ENCODE measurements at regions of chr1 and their contacts with region 1.

Region 1: GRCh38 chr1:234533975-234534876 is 55.2 kb upstream of the TARBP1 start:
- DNase-seq: peak; percentile 89 to 95
- ATAC-seq: peak in 7 of 8 donors; percentile 6 to 60 (median 30)
- H3K4me3 ChIP-seq: peak overlapping the region in 1 of 10 donors; percentile 1
- H3K27ac ChIP-seq: peak overlapping the region; percentile 94 to 99 (median 98)
- H3K4me1 ChIP-seq: peaks cover 53 to 100% (median 97%) of the 10 kb centered on the region in 9 donors
- H3K27me3 ChIP-seq: no peaks in the 10 kb centered on the region
- CTCF ChIP-seq: no peak

Region 2: DNA sequence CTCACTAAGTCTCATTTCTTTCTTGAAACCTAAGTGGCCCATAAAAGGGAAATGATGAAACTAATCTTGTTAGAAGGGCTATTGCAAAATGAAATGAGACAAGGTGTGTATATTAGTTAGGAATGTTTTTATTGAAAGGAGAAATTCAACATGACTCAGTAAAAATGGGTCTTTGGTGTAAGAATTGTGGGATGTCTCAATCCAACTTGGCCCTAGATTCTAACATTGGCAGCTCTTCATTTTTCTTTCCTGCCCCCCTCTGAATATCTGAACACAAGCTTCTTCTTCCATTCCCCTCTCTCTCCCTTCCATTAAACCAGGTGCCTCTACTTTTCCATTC is 28.5 kb before region 1 on chr1:
- intact Hi-C with region 1: no loop called
- DNase-seq: no peak
- ATAC-seq: no peak
- H3K4me3 ChIP-seq: no peak overlapping the region
- H3K27ac ChIP-seq: no peak overlapping the region
- H3K4me1 ChIP-seq: peaks cover 0 to 14% (median 7%) of the 10 kb centered on the region in 9 donors
- H3K27me3 ChIP-seq: no peaks in the 10 kb centered on the region
- CTCF ChIP-seq: no peak

Region 3: GRCh38 chr1:234579967-234580366 is 45.7 kb after region 1 on chr1:
- intact Hi-C with region 1: loop called in 2 of 10 experiments (anchors 2 to 5 kb)
- DNase-seq: no peak
- ATAC-seq: no peak
- H3K4me3 ChIP-seq: no peak overlapping the region
- H3K27ac ChIP-seq: no peak overlapping the region
- H3K4me1 ChIP-seq: peaks cover 0 to 35% (median 27%) of the 10 kb centered on the region in 9 donors
- H3K27me3 ChIP-seq: no peaks in the 10 kb centered on the region
- CTCF ChIP-seq: peak in 2 of 9 donors; percentile 18 to 26

Region 4: GRCh38 chr1:234887016-234887900 is 353.0 kb after region 1 on chr1:
- intact Hi-C with region 1: loop called in 1 of 10 experiments (anchors 5 kb)
- DNase-seq: peak in 1 of 2 donors; percentile 70
- ATAC-seq: peak; percentile 60 to 86 (median 82)
- H3K4me3 ChIP-seq: peak overlapping the region in 1 of 10 donors; percentile 7
- H3K27ac ChIP-seq: peak overlapping the region; percentile 87 to 99 (median 94)
- H3K4me1 ChIP-seq: peaks cover 7 to 49% (median 33%) of the 10 kb centered on the region in 9 donors
- H3K27me3 ChIP-seq: no peaks in the 10 kb centered on the region
- CTCF ChIP-seq: no peak

Region 5: GRCh38 chr1:234925440-234926263 is 391.4 kb after region 1 on chr1:
- intact Hi-C with region 1: loop called in 1 of 10 experiments (anchors 10 kb)
- DNase-seq: no peak
- ATAC-seq: peak in 7 of 8 donors; percentile 34 to 69 (median 65)
- H3K4me3 ChIP-seq: no peak overlapping the region
- H3K27ac ChIP-seq: peak overlapping the region in 9 of 10 donors; percentile 33 to 75 (median 59)
- H3K4me1 ChIP-seq: peaks cover 10 to 64% (median 45%) of the 10 kb centered on the region in 9 donors
- H3K27me3 ChIP-seq: no peaks in the 10 kb centered on the region
- CTCF ChIP-seq: no peak

Region 6: GRCh38 chr1:234987415-234988154 is 453.4 kb after region 1 on chr1:
- intact Hi-C with region 1: loop called in 2 of 10 experiments (anchors 5 to 10 kb)
- DNase-seq: peak; percentile 58 to 82
- ATAC-seq: peak; percentile 74 to 93 (median 90)
- H3K4me3 ChIP-seq: no peak overlapping the region
- H3K27ac ChIP-seq: peak overlapping the region; percentile 77 to 98 (median 88)
- H3K4me1 ChIP-seq: peaks cover 18 to 66% (median 44%) of the 10 kb centered on the region in 9 donors
- H3K27me3 ChIP-seq: no peaks in the 10 kb centered on the region
- CTCF ChIP-seq: no peak

Measured in heart right ventricle (tissue), 16 donors.